ENCODE measurements at regions of chr6 and their contacts with region 1.

Region 1: DNA sequence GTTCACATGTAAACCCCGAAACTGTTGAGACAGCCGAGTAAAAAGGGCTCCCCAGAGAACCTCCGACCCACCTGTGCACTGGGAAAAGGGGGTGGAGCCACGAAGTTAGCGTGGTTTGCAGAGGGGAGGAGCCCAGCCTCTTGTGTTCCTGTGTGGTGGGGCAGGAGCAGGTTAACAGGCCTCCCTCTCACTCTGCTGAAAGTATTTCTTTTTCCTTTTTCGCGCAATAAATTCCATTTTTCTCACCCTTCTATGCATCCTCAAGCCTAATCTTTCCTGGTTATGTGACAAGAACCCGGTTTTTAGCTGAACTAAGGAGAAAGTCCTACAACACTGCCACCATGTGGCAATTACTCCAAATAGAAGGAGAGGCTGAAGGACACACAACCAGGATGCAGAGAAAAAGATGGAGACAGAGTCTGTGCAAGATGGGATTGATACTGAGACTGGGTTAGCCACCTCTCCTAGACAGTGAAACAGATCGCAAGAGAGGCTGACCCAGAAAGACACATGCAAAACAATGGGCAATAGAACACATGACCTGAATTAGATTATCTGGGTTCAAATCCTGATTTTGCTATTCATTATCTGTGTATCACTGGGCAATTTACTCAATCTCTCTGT is 168.7 kb upstream of the PRSS16 start:
- DNase-seq: peak in 4 of 10 donors; percentile 27 to 65 (median 36)

Region 2: GRCh38 chr6:26342106-26343004 is 736.5 kb before region 1 on chr6:
- intact Hi-C with region 1: loop called (anchors 10 kb)
- DNase-seq: no peak

Region 3: DNA sequence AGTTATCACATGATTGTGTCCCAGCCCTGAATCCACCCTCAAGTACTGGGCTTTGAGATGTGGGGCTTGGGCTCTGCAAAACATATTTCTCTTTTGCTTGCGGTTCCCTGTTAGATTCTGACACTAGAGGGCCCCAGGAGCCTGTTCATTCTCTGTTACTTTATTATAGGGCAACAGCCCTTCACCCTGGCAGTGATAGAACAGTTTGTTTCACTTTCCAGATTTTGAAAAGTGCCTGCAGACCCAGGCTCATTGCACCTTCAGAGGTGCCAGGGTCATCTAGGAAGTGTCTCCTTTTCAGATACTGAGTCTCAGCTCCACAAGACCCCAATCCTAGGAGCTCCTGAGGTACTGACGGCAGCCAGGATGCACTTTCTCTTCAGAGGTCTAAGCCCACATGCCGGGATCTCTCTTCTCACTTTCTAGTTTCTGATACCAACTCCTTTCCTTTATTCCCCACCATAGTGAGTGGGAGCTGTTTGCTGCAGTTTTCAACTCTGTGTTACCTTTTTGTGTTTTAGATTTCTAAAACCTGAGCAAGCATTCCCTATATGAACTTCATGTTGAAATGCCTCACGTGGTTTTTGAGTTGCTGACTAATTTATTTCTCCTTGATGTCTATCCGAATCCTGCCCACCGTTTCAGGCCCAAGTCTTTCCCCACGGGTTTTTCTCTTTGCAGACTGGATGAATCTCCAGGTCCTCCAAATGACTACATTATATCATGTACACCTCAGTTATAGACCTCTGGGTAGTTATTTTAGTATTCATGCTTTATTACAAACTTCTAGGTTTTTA is 471.2 kb before region 1 on chr6:
- intact Hi-C with region 1: loop called (anchors 1 kb)
- DNase-seq: peak in 3 of 10 donors; percentile 38 to 46 (median 42)

Region 4: DNA sequence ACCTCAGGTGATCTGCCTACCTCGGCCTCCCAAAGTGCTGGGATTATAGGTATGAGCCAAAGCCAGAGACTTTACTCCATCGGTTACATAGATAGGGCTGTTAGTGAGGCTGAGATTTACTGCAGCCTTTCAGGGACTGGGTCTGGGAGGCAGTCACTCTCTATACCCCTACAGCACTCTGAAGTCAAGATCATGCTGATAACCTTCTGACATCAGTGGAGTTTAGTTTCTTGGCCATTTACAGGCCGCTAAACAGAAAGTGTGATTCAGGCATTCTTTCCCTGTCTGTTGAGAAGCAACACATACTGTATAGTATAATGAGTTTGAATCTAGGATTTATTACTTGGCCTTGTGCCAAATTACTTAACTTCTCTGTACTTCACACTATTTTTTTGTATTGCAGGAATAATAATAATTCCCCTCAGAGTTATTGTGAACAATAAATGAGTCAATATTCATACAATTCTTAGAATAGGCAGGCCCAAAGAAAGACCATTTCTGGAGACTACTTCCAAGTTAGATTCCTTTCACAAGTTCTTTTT is 313.7 kb after region 1 on chr6:
- intact Hi-C with region 1: no loop called
- DNase-seq: no peak

Region 5: DNA sequence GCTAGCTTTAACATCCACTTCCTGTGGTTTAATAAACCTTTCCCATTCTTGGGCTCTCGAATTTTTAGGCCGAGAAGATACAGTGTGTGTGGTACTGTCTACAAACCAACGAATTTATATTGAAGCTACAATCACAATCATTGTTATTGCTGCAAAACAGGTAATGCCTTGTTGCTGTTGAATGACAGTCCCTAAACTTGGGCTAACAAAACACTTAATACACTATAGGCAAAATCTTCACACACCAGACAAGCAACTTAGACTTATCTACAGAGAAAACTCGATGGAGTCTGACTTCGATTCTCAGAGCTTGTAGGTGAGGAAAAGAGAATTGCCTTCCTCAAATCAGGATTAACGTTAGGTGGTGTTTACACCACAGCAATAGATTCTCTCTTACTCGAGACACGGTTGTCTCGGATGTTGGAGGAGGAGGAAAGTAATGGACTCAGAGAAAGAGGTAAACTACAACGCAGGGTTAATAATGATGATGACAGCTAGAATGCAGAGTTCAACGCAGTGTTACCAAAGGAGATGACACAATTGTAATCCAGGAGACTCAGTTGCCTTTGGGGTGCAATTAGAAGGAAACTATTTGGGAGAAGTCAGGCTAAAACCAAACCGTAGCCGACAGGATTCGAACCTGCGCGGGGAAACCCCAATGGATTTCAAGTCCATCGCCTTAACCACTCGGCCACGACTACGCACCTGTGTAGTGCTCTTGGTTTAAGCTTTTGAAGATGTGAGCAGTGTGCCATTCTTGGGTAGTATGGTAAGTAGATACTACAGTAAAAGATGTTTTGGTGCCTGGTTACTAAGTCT is 426.6 kb after region 1 on chr6:
- intact Hi-C with region 1: no loop called
- DNase-seq: peak in 1 of 10 donors; percentile 21

Measured in posterior cingulate gyrus (tissue), 11 donors.